ENCODE measurements at regions of chr11 and their contacts with region 1.

Region 1: DNA sequence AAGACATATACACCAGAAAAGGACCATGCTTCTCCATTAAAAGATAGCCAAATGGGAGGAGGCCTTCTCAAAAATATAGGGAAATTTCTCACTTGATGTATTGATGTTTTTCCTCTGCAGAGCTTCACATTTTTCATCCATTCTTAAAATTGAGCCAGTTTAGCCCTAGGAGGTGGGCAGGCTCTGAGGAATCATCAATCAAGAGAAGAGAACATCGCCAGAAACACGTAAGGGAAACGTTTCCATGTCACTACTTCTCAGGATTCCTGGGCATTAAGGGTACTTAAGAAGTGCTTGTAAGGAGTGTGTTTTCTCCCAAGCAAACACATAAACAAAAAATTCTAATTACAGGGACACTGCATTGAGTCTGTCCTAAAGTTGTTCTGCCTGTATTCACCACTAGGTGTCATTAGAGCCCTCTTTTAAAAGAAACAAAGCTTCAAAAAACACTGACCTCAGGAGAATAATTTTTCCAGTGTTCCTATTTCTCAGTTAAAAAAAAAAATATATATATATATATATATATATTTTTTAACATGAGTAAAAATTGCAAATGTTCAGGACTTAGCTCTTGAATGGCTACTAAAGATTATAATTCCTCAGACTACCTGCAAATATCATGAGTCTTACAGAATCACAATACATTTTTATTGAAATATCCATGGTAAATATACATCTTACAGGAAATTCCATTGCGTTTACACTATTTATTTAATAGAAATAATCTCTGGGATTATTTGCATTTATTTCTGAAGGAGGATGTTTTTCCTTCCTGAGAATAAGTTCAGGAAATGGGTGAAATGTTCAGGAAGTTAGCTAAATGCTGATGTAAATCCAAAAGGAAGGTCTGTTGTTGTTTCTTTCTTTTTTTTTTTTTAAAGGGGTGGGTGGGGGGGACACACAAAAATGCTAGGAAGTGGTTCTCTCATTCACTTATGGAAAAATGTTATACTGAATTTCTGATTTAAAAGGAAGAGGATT is 16.0 kb downstream of the FZD4 start:
- DNase-seq: no peak
- H3K4me3 ChIP-seq: no peak overlapping the region
- H3K27ac ChIP-seq: no peak overlapping the region
- H3K27me3 ChIP-seq: no peaks in the 10 kb centered on the region
- CTCF ChIP-seq: peak; percentile 67

Region 2: GRCh38 chr11:86761978-86762377 is 177.2 kb before region 1 on chr11:
- CTCF ChIA-PET with region 1: no interaction called
- POLR2A ChIA-PET with region 1: no interaction called
- DNase-seq: no peak
- H3K4me3 ChIP-seq: no peak overlapping the region
- H3K27ac ChIP-seq: peak overlapping the region; percentile 50
- H3K27me3 ChIP-seq: no peaks in the 10 kb centered on the region
- CTCF ChIP-seq: no peak

Region 3: GRCh38 chr11:86773513-86774252 is 165.5 kb before region 1 on chr11:
- CTCF ChIA-PET with region 1: no interaction called
- POLR2A ChIA-PET with region 1: no interaction called
- DNase-seq: no peak
- H3K4me3 ChIP-seq: no peak overlapping the region
- H3K27ac ChIP-seq: no peak overlapping the region
- H3K27me3 ChIP-seq: no peaks in the 10 kb centered on the region
- CTCF ChIP-seq: no peak

Region 4: DNA sequence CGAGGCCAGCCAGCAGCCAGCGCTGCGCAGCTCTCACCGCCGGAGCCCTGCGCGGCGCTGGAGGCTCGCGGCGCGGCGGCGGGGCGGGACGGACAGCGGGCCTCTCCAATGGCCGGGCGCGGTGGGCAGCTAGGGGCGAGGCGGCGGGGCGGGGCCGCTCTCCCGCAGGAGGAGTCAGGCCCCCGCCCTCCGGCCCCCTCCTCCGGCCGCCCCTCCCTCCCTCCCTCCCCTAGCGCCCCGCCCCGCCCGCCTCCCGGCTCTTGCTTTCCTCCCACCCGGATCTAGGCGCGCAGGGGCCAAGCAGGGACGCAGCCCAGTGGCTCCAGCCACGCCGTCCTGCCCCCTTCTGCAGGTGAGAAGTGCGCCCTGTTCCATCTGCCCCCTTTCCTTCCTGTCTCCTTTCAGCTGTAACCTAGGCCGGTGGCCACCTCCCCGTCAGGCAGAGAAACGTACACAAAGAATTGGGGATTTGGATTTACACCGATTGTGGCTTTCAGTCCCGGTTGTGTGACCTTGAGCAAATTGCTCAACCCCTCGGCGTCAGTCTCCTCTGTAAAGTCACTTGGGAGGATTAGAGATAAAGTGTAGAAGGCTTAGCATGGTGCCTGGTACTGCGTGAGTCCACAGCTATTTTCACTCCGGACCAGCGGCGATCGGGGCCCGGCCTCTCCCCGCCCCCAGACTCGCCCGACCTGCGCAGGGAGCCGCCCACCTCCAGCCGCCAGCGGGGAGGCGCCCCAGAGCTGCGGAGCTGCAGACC is 16.4 kb after region 1 on chr11 and contains the start of gene FZD4:
- CTCF ChIA-PET with region 1: interaction called, 30 read pairs
- POLR2A ChIA-PET with region 1: interaction called, 6 read pairs
- DNase-seq: peak; percentile 50
- H3K4me3 ChIP-seq: peak within 1 kb of the TSS; percentile 86
- H3K27ac ChIP-seq: peak within 1 kb of the TSS; percentile 25
- H3K27me3 ChIP-seq: peaks cover 12% of the 10 kb centered on the region
- CTCF ChIP-seq: peak; percentile 24
- polyA plus RNA-seq, gene FZD4: 4.3 and 5.3 TPM in 2 replicates

Region 5: DNA sequence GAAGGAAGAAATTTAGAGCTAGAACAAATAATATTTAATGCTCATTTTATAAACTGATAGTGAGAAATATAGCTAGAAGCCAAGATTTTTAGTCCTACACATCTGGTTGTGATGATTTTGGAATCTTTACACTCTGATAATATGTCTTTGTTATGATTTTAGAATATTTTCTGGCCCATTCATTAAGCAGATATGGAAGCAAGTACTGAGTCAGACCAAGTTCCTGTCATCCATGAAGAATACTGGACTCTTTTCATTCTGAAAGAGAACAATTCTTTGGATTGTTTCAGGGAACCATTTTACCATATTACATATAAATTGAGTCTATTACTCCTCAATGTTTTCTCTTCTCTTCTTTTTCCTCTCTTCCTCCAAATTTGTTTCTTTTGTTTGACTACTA is 325.9 kb after region 1 on chr11:
- CTCF ChIA-PET with region 1: interaction called, 10 read pairs
- POLR2A ChIA-PET with region 1: no interaction called
- DNase-seq: peak; percentile 13
- H3K4me3 ChIP-seq: no peak overlapping the region
- H3K27ac ChIP-seq: no peak overlapping the region
- H3K27me3 ChIP-seq: no peaks in the 10 kb centered on the region
- CTCF ChIP-seq: no peak

Region 6: DNA sequence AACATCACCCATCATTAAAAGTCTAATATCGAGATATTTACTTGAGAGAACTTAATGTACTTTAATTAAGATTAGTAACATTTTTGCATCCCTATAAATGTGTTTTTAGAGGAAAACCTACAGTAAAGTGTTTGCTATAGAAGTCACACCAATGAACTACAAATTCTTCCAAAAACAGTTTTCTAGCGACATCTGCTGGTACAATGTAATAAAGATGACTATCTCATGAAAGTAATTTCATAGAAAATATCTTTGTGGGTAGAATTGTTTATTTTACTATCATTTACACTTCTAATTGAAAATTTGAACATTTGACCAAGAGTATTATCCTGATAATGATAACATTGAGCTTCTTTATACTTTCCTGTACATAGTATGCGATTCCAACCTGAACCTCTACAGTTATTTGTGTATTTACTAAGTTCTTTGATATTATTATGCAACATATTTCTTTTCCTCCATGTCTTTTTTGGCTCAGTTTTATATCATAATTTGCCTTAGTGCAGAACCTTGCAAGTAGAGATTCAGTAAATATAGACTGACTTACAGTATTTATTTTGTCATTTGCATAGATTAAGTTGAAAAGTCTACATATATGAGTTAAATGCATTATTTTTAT is 351.2 kb after region 1 on chr11:
- CTCF ChIA-PET with region 1: interaction called, 172 read pairs
- POLR2A ChIA-PET with region 1: no interaction called
- DNase-seq: peak; percentile 24
- H3K4me3 ChIP-seq: no peak overlapping the region
- H3K27ac ChIP-seq: no peak overlapping the region
- H3K27me3 ChIP-seq: no peaks in the 10 kb centered on the region
- CTCF ChIP-seq: peak; percentile 62

Region 7: GRCh38 chr11:87352759-87353707 is 413.8 kb after region 1 on chr11:
- CTCF ChIA-PET with region 1: interaction called, 13 read pairs
- POLR2A ChIA-PET with region 1: no interaction called
- DNase-seq: peak; percentile 32
- H3K4me3 ChIP-seq: no peak overlapping the region
- H3K27ac ChIP-seq: no peak overlapping the region
- H3K27me3 ChIP-seq: peaks cover 2% of the 10 kb centered on the region
- CTCF ChIP-seq: peak; percentile 99

Measured in AG04450 (cell line).